A549 (cell line): ENCODE measurements at regions of chr11 and their contacts with region 1.

Region 1: GRCh38 chr11:62394825-62395538 is 23.9 kb upstream of the SCGB1A1 start:
- DNase-seq: peak; percentile 83 to 93
- ATAC-seq: peak; percentile 82 to 84
- H3K4me3 ChIP-seq: peak overlapping the region; percentile 8; the same call in 1 of the 3 replicates
- H3K27ac ChIP-seq: peak overlapping the region; percentile 65 to 76
- H3K4me1 ChIP-seq: peaks cover 37% of the 10 kb centered on the region
- CTCF ChIP-seq: peak; percentile 91
- EP300 ChIP-seq: no peak
- POLR2A ChIP-seq: no peak
- RAD21 ChIP-seq: peak; percentile 93

Region 2: DNA sequence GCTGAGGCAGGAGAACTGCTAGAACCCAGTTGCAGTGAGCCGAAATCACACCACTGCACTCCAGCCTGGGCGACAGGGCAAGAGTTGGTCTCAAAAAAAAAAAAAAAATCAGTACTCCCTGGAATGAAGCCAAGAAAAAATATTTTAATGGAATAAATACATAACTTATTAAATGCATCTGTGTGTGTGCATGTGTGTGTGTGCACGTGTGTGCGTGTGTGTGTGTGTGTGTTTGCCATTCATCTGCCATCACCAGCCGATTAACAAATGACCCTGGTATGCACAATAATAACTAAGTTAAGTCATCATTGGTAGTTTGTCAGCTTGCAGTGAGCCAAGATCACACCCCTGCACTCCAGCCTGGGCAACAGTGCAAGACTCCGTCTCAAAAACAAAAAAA is 11.2 kb before region 1 on chr11:
- CTCF ChIA-PET with region 1: interaction called, 14 read pairs
- POLR2A ChIA-PET with region 1: no interaction called
- DNase-seq: no peak
- ATAC-seq: no peak
- H3K4me3 ChIP-seq: no peak overlapping the region
- H3K27ac ChIP-seq: no peak overlapping the region
- H3K4me1 ChIP-seq: peaks cover 22% of the 10 kb centered on the region
- CTCF ChIP-seq: no peak
- EP300 ChIP-seq: no peak
- POLR2A ChIP-seq: no peak
- RAD21 ChIP-seq: no peak

Region 3: GRCh38 chr11:62427630-62428233 is 32.8 kb after region 1 on chr11:
- CTCF ChIA-PET with region 1: interaction called, 74 read pairs
- POLR2A ChIA-PET with region 1: no interaction called
- DNase-seq: no peak
- ATAC-seq: no peak
- H3K4me3 ChIP-seq: no peak overlapping the region
- H3K27ac ChIP-seq: peak overlapping the region; percentile 55 to 86
- H3K4me1 ChIP-seq: peaks cover 48% of the 10 kb centered on the region
- CTCF ChIP-seq: no peak
- EP300 ChIP-seq: no peak
- POLR2A ChIP-seq: no peak
- RAD21 ChIP-seq: no peak

Region 4: DNA sequence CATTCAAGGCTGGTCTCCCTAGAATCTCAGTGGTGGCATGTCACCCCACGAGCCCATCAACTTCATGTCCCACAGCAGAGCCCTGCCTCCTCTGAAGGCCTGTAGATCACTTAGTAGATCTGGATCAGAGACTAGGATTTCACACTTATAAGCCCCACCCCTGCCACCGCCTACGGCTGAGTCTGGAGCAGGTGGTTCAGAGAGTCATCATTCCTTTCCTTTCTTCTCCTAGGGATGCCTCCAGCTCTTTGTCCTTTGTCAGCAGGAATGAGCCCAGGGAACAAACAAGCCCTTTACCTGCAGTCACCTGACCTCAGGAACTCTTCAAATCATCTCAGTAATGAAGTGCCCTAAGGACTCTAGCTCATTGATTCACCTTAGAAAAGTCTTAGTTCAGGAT is 61.6 kb after region 1 on chr11:
- CTCF ChIA-PET with region 1: interaction called, 10 read pairs
- POLR2A ChIA-PET with region 1: no interaction called
- DNase-seq: no peak
- ATAC-seq: no peak
- H3K4me3 ChIP-seq: no peak overlapping the region
- H3K27ac ChIP-seq: no peak overlapping the region
- H3K4me1 ChIP-seq: peaks cover 15% of the 10 kb centered on the region
- CTCF ChIP-seq: no peak
- EP300 ChIP-seq: no peak
- POLR2A ChIP-seq: no peak
- RAD21 ChIP-seq: no peak

Region 5: DNA sequence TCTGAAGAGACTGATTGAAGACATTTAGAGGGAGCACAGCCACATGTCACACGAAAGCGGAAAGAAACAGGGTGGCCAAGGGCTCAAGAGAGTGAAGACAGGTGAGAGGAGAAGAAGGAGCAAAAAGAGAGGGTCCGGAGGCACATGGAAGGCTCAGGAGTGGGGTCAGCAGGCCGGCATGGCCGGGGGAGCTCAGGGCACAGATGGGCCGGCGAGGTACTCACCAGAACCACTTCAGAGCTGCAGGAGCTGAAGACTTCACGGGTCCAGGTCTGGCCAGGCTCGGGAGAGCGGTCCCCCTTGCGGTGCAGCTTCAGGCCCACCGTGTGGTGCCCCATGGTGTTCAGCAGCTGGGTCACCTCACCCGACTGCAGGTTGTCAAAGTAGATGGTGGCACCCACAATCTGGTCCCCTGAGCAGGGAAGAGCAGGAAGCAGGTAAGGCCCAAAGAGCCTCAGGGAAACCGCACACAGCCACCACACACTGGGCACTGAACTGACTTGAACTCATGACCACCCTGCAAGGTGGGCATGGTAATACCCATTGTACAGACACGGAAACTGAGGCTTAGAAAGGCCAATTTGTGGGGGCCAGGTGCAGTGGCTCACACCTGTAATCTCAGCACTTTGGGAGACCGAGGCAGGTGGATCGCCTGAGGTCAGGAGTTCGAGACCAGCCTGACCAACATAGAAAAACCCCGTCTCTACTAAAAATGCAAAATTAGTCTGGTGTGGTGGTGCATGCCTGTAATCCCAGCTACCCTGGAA is 140.0 kb after region 1 on chr11:
- CTCF ChIA-PET with region 1: interaction called, 201 read pairs
- POLR2A ChIA-PET with region 1: no interaction called
- DNase-seq: no peak
- ATAC-seq: no peak
- H3K4me3 ChIP-seq: no peak overlapping the region
- H3K27ac ChIP-seq: no peak overlapping the region
- H3K4me1 ChIP-seq: peaks cover 30% of the 10 kb centered on the region
- CTCF ChIP-seq: no peak
- EP300 ChIP-seq: no peak
- POLR2A ChIP-seq: no peak
- RAD21 ChIP-seq: no peak

Region 6: DNA sequence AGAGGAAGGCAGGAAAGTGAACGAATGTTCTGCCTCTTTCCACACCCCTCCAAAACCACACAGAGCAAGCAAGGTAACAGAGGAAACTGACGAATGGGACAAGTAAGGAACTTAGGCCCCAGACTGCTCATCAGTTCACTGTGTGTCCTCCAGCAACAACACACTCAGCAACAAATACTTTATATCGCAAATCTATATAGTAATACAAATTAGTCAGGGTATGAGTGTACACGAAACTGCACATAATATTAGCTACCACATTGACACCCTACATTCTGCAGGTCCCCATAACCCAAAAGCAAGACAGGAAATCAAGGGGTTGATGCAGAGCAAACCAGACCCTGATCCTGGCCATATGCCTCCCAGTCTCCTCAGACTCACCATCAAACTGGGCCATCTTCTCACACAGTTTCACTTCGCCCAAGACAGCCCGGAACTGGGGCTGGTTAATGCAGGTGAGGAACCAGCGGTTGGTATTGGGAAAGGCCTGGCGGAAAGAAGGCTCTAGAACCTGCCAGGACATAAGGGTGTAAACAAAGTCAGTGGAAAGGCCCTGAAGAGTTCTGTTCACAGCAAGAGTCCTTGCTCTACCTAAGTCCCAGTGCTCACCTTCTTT is 172.1 kb after region 1 on chr11:
- CTCF ChIA-PET with region 1: interaction called, 129 read pairs
- POLR2A ChIA-PET with region 1: no interaction called
- DNase-seq: no peak
- ATAC-seq: no peak
- H3K4me3 ChIP-seq: no peak overlapping the region
- H3K27ac ChIP-seq: no peak overlapping the region
- H3K4me1 ChIP-seq: peaks cover 79% of the 10 kb centered on the region
- CTCF ChIP-seq: no peak
- EP300 ChIP-seq: no peak
- POLR2A ChIP-seq: no peak
- RAD21 ChIP-seq: no peak

Region 7: GRCh38 chr11:62678770-62679696 is 284.1 kb after region 1 on chr11 and contains the start of gene UBXN1:
- CTCF ChIA-PET with region 1: interaction called, 11 read pairs
- POLR2A ChIA-PET with region 1: no interaction called
- DNase-seq: peak; percentile 87 to 92
- ATAC-seq: peak; percentile 84 to 86
- H3K4me3 ChIP-seq: peak within 1 kb of the TSS; percentile 67
- H3K27ac ChIP-seq: peak within 1 kb of the TSS; percentile 87 to 92
- H3K4me1 ChIP-seq: peaks cover 24% of the 10 kb centered on the region
- CTCF ChIP-seq: no peak
- EP300 ChIP-seq: no peak
- POLR2A ChIP-seq: peak; percentile 57
- RAD21 ChIP-seq: no peak
- polyA plus RNA-seq, gene UBXN1: 56.8 and 120 TPM in 2 replicates